Mammary epithelial cell (primary cell): ENCODE measurements at regions of chr17 and their contacts with region 1.

Region 1: DNA sequence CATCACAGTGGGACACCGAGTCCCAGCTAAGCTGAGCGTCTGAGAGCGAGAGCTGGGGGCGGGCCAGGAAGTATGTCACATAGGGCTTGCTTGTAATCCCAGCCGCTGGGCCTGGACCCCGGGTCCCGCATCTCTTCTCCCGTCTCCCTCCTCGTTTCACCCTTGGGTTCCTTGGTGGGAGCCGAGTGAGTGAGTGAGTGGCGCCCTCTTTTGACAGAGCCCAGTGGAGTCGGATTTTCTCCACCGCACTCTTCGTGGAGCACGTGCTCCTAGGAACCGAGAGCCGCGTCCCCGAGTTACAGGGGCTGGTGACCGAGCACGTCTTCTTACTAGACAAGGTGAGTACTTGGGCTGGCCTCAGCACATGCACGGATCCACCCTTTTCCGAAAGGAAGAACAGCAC is 50.8 kb upstream of the ENDOV start:
- DNase-seq: no peak
- H3K4me3 ChIP-seq: no peak overlapping the region
- H3K27ac ChIP-seq: no peak overlapping the region
- H3K4me1 ChIP-seq: peaks cover 13% of the 10 kb centered on the region
- H3K27me3 ChIP-seq: no peaks in the 10 kb centered on the region
- CTCF ChIP-seq: peak; percentile 41 to 53

Region 2: DNA sequence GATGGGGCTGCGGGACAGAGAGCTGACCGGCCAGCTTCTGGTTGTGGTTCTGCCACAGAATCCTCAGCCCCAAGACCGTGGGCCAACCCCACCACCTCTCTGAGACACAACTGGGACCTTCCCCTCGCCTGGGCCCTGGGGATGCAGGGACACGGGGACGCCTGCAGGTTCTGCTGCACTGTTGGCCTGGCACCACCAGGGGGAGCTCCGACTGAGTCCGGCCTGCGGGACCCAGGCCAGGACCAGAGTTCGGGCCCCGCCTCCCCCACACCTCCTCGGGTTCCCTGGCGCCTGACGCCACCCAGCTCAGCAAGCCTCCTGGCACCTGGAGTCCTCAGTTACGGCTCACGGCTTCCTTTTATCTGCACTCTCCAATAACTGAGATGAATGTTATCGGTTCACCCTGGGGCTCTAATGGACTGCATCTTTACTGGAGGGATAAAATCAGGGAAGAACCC is 355.8 kb before region 1 on chr17:
- CTCF ChIA-PET with region 1: no interaction called
- dilution Hi-C with region 1: no loop called
- in situ Hi-C with region 1: no loop called
- intact Hi-C with region 1: loop called (anchors 5 kb)
- DNase-seq: peak; percentile 48
- H3K4me3 ChIP-seq: no peak overlapping the region
- H3K27ac ChIP-seq: no peak overlapping the region
- H3K4me1 ChIP-seq: no peaks in the 10 kb centered on the region
- H3K27me3 ChIP-seq: no peaks in the 10 kb centered on the region
- CTCF ChIP-seq: peak; percentile 94 to 95

Region 3: DNA sequence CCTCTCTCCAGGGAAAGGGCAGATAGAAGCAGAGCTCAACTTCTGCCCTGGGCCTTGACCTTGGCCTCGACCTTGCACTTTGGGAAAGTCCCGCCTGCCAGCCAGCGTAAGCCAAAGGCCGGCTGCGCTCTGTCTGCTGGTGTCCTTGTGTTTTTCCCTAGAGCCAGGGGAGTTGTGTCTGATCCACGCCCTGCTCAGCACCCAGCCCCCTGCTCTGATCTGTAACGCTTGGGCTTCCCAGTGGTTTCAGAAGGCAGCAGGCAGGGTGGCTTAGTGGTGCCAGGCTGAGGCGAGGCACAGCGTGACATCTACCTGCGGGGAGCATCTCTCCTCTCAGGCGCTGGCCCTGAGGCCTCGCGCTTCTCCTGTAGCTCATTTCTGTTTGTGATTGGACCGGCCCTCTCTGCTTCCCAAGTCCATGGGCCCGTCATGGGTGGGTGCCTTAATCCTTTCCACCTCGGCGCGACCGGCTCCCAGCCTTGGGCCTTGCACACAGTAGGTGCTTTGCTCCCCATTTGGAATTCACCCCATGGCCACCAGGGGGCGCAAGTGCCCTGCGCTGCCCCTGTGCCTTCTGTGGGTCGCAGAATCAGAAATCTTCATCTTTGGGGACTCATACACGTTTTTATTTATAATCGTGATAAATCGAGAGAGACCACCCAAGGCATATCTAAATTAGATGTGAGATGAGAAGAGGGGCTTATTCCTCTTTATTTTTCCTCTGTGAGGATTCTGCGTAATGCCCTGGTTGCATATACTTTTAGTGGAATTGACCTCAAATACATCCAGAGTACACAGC is 168.3 kb before region 1 on chr17:
- CTCF ChIA-PET with region 1: no interaction called
- dilution Hi-C with region 1: no loop called
- in situ Hi-C with region 1: no loop called
- intact Hi-C with region 1: loop called (anchors 5 kb)
- DNase-seq: no peak
- H3K4me3 ChIP-seq: no peak overlapping the region
- H3K27ac ChIP-seq: no peak overlapping the region
- H3K4me1 ChIP-seq: peaks cover 10% of the 10 kb centered on the region
- H3K27me3 ChIP-seq: no peaks in the 10 kb centered on the region
- CTCF ChIP-seq: peak; percentile 70 to 76

Region 4: GRCh38 chr17:80307994-80308691 is 56.1 kb before region 1 on chr17:
- CTCF ChIA-PET with region 1: no interaction called
- dilution Hi-C with region 1: no loop called
- in situ Hi-C with region 1: no loop called
- intact Hi-C with region 1: no loop called
- DNase-seq: no peak
- H3K4me3 ChIP-seq: no peak overlapping the region
- H3K27ac ChIP-seq: no peak overlapping the region
- H3K4me1 ChIP-seq: no peaks in the 10 kb centered on the region
- H3K27me3 ChIP-seq: no peaks in the 10 kb centered on the region
- CTCF ChIP-seq: no peak